SK-N-SH (cell line): ENCODE measurements at regions of chr15 and their contacts with region 1.

Region 1: GRCh38 chr15:92714477-92715401 is 59.2 kb upstream of the FAM174B start:
- DNase-seq: peak; percentile 89
- H3K4me3 ChIP-seq: peak overlapping the region; percentile 57 to 93
- H3K27ac ChIP-seq: peak overlapping the region; percentile 46 to 67
- H3K4me1 ChIP-seq: peaks cover 0 to 3% of the 10 kb centered on the region in 2 experiments; a peak in 2 of 4 replicates
- H3K27me3 ChIP-seq: 0 out of 2 replicates have a peak, but pooled peaks cover 5% of the 10 kb centered on the region
- CTCF ChIP-seq: peak; percentile 90
- EP300 ChIP-seq: no peak
- RAD21 ChIP-seq: peak; percentile 94

Region 2: DNA sequence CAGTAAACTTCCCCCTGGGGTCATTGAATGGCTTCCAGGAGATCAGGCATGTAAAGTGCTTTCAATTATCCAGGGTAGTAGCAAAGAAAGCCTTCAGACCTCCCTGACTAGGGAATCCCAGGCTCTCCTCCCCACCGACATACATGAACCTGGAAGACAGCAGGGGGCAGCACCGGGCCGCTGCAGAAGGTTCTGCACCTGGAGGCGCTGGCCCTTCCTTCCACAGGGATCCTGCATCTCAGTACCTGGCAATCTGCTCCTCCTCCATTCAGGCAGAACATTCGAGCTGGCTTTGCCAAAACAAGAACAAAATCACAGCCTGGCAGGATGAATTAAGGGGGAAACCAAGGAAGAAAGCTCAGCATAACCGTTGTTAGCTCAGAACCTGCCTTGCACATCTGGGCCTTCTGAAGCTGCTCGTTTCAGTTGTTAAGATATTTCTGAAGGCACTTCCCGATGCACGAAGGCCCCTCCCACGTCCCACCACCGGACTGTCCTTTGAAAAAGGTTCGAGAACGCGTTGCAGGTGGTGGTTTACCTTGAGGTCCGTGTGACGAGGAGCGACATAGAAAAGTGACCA is 623.5 kb before region 1 on chr15:
- CTCF ChIA-PET with region 1: interaction called, 67 read pairs
- POLR2A ChIA-PET with region 1: no interaction called
- DNase-seq: peak; percentile 47
- H3K4me3 ChIP-seq: no peak overlapping the region
- H3K27ac ChIP-seq: no peak overlapping the region
- H3K4me1 ChIP-seq: no peaks in the 10 kb centered on the region; a peak in 1 of 4 replicates
- H3K27me3 ChIP-seq: no peaks in the 10 kb centered on the region
- CTCF ChIP-seq: peak; percentile 64
- EP300 ChIP-seq: no peak
- RAD21 ChIP-seq: peak; percentile 60

Region 3: DNA sequence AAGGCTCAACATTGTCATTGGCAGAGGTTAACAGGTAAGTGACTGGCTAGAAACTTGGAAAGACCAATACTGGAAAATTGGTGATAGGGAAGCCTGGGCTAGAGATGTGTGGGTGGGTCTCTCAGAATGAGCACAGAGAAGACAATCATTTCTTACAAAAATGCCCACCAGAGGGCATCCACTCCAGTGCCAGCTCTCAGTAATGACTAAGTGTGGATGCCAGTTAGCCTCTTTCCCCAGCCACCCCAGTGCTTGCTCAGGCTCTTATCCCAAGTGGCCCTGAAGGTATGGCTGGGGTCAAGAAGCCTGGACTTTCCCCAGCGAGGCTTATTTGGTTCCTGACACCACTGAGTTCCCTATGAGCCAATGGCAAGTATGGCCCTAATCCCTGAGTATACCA is 437.0 kb before region 1 on chr15:
- CTCF ChIA-PET with region 1: interaction called, 27 read pairs
- POLR2A ChIA-PET with region 1: no interaction called
- DNase-seq: peak; percentile 50
- H3K4me3 ChIP-seq: no peak overlapping the region
- H3K27ac ChIP-seq: no peak overlapping the region
- H3K4me1 ChIP-seq: peaks cover 0 to 7% of the 10 kb centered on the region in 2 experiments; a peak in 1 of 4 replicates
- H3K27me3 ChIP-seq: no peaks in the 10 kb centered on the region
- CTCF ChIP-seq: no peak; the same call in 1 of the 2 replicates
- EP300 ChIP-seq: no peak
- RAD21 ChIP-seq: peak; percentile 68

Region 4: GRCh38 chr15:92521624-92522008 is 193.1 kb before region 1 on chr15:
- CTCF ChIA-PET with region 1: interaction called, 95 read pairs
- POLR2A ChIA-PET with region 1: interaction called, 5 read pairs
- DNase-seq: peak; percentile 64
- H3K4me3 ChIP-seq: no peak overlapping the region; a peak in 1 of 4 replicates
- H3K27ac ChIP-seq: no peak overlapping the region
- H3K4me1 ChIP-seq: no peaks in the 10 kb centered on the region
- H3K27me3 ChIP-seq: no peaks in the 10 kb centered on the region
- CTCF ChIP-seq: peak; percentile 19; the same call in 1 of the 2 replicates
- EP300 ChIP-seq: no peak
- RAD21 ChIP-seq: peak; percentile 90

Region 5: GRCh38 chr15:92617549-92618520 is 96.9 kb before region 1 on chr15:
- CTCF ChIA-PET with region 1: interaction called, 15 read pairs
- POLR2A ChIA-PET with region 1: no interaction called
- DNase-seq: peak; percentile 79
- H3K4me3 ChIP-seq: no peak overlapping the region
- H3K27ac ChIP-seq: peak overlapping the region in 1 of 2 experiments; percentile 60; a peak in 2 of 4 replicates
- H3K4me1 ChIP-seq: peaks cover 0 to 15% of the 10 kb centered on the region in 2 experiments; a peak in 1 of 4 replicates
- H3K27me3 ChIP-seq: no peaks in the 10 kb centered on the region
- CTCF ChIP-seq: no peak
- EP300 ChIP-seq: peak in 1 of 2 experiments; percentile 33; a peak in 1 of 4 replicates
- RAD21 ChIP-seq: no peak

Region 6: DNA sequence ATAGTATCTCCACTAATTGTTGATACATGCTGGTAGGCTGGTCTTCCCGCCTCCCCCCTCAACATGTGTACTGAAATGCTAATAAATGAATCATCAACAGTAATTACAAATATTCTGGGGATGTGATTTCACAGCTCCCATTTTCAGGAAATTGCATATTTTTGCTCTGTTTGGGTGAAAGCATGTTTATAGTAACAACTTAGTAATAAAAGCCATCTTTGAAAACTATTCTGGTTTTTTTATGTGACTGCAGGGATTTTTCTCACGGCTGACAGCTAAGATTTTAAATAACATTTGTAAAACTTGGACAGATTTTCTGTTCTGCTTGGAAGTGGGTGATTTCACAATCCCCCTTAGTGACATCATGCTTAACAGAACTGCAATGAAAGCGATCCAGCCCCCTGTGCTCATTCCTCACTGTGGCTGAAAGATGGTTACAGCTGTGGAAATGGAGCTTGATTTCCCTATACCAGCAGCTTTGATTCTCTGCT is 33.6 kb before region 1 on chr15:
- CTCF ChIA-PET with region 1: interaction called, 11 read pairs
- POLR2A ChIA-PET with region 1: no interaction called
- DNase-seq: no peak
- H3K4me3 ChIP-seq: no peak overlapping the region
- H3K27ac ChIP-seq: no peak overlapping the region
- H3K4me1 ChIP-seq: peaks cover 0 to 4% of the 10 kb centered on the region in 2 experiments; a peak in 2 of 4 replicates
- H3K27me3 ChIP-seq: no peaks in the 10 kb centered on the region
- CTCF ChIP-seq: no peak
- EP300 ChIP-seq: no peak
- RAD21 ChIP-seq: no peak

Region 7: GRCh38 chr15:92970656-92971055 is 255.9 kb after region 1 on chr15:
- CTCF ChIA-PET with region 1: no interaction called
- POLR2A ChIA-PET with region 1: no interaction called
- DNase-seq: no peak
- H3K4me3 ChIP-seq: no peak overlapping the region
- H3K27ac ChIP-seq: no peak overlapping the region
- H3K4me1 ChIP-seq: no peaks in the 10 kb centered on the region; a peak in 1 of 4 replicates
- H3K27me3 ChIP-seq: no peaks in the 10 kb centered on the region
- CTCF ChIP-seq: no peak
- EP300 ChIP-seq: no peak
- RAD21 ChIP-seq: no peak